ENCODE measurements at regions of chr11 and their contacts with region 1.

Region 1: DNA sequence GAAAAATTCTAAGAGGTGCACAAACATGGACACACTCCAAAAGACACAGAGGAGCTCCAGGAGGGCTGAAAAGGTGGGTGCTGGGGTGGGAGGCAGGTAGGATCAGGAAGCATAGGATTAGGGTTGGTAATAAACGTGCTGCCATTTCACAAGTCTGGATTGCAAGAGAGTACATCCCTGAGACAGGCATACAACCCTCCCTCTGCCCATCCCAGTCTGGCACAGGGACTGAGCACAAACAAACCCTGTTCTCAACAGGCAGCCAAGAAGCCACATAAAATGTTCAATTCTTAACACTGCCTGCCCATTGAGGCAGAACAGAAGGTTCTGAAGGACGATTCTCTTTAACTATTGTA is 18.5 kb downstream of the SLC35F2 start:
- DNase-seq: no peak
- ATAC-seq: no peak
- H3K4me3 Mint-ChIP-seq: peak overlapping the region; percentile 29
- H3K27ac Mint-ChIP-seq: peak overlapping the region; percentile 90
- H3K4me1 Mint-ChIP-seq: peaks cover 35% of the 10 kb centered on the region
- H3K27me3 Mint-ChIP-seq: no peaks in the 10 kb centered on the region
- CTCF ChIP-seq: no peak

Region 2: DNA sequence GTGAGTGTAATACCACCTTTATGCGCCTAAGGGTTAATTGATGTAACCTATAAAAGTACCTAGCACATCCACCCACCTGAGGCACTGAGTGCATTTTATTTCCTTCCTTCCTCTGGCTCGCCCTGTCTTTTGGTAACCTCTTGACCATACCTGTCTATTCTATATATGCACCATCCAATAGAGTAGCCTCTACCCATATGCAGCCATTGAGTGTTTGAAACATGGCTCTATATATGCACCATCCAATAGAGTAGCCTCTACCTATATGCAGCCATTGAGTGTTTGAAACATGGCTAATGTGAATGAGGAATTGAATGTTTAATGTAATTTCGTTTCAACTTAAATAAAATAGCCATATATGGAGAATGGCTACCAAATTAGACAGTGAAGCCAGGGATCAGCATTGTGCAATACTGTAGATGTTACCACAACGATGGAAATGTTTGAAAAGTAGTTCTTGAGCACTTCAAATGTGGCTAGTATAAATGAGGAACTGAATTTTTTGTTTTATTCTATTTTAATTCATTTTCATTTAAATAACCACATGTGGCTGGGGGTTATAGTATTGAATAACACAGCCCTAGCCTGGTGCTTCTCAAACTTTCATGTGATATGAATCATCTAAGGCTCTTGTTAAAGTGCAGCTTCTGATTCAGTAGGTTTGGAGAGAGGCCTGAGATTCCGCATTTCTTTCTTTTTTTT is 15.3 kb before region 1 on chr11:
- CTCF ChIA-PET with region 1: no interaction called
- POLR2A ChIA-PET with region 1: no interaction called
- intact Hi-C with region 1: loop called (anchors 2 kb)
- DNase-seq: no peak
- ATAC-seq: peak; percentile 65
- H3K4me3 Mint-ChIP-seq: no peak overlapping the region
- H3K27ac Mint-ChIP-seq: no peak overlapping the region
- H3K4me1 Mint-ChIP-seq: peaks cover 21% of the 10 kb centered on the region
- H3K27me3 Mint-ChIP-seq: no peaks in the 10 kb centered on the region
- CTCF ChIP-seq: no peak

Region 3: DNA sequence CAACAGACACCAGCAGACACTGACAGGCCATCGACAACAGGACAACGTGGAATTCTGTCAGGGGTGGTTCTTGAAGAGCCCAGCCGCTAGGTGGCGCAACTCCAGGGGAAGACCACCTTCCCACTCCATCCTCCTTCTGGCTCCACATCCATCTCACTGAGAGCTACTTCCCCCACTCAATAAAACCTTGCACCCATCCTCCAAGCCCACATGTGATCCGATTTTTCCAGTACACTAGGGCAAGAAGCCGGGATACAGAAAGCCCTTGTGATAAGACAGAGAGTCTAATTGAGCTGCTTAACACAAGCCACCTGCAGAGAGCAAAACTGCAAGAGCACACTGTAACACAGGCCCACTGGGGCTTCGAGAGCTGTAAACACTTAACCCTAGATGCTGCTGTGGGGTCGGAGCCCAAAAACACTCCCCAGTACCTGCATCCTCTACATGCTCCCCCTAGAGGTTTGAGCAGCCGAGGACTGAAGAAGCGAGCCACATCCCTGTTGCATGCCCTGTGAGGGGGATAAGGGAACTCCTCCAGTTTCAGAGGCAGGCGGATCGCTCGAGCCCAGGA is 76.6 kb after region 1 on chr11:
- CTCF ChIA-PET with region 1: no interaction called
- POLR2A ChIA-PET with region 1: interaction called, 12 read pairs
- intact Hi-C with region 1: no loop called
- DNase-seq: peak; percentile 31
- ATAC-seq: peak; percentile 52
- H3K4me3 Mint-ChIP-seq: no peak overlapping the region
- H3K27ac Mint-ChIP-seq: no peak overlapping the region
- H3K4me1 Mint-ChIP-seq: peaks cover 5% of the 10 kb centered on the region
- H3K27me3 Mint-ChIP-seq: peaks cover 13% of the 10 kb centered on the region
- CTCF ChIP-seq: peak; percentile 57

Measured in activated B cell treated with CpG ODN at 0.5 μM for 24 hours (primary cell).